ENCODE measurements at regions of chr5 and their contacts with region 1.

Region 1: GRCh38 chr5:76582230-76583162 is 40.7 kb downstream of the F2RL2 start:
- DNase-seq: no peak
- ATAC-seq: no peak
- H3K4me3 ChIP-seq: no peak overlapping the region
- H3K27ac ChIP-seq: no peak overlapping the region
- H3K4me1 ChIP-seq: no peaks in the 10 kb centered on the region
- H3K27me3 ChIP-seq: peaks cover 16% of the 10 kb centered on the region; the same call in 1 of the 2 replicates
- CTCF ChIP-seq: no peak

Region 2: DNA sequence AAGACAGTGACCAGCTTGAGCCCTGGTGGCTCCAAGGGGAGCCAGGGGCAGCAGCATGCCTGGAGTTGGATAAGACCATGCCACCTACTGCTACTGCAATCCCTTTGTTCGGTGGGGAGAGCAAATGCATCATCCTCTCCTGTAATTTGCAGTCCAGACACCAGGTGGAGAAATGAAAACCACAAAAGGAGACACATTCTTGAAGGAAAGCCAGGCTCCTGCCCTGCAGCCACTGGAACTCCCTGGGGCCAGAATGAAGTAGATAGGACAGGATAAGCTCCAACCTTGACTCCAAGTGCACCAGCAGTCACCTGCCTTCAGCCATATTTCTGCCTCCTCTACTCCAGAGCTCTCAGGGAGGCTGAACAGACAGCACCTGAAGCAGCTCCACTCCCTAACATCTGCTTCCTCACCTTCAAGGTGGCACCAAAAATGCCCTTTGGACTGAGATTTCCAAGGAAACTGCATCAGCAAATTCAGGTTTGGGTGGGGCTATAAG is 244.5 kb before region 1 on chr5:
- CTCF ChIA-PET with region 1: no interaction called
- POLR2A ChIA-PET with region 1: no interaction called
- in situ Hi-C with region 1: no loop called
- intact Hi-C with region 1: loop called (anchors 5 kb)
- DNase-seq: peak; percentile 36
- ATAC-seq: peak; percentile 89
- H3K4me3 ChIP-seq: no peak overlapping the region
- H3K27ac ChIP-seq: no peak overlapping the region
- H3K4me1 ChIP-seq: peaks cover 7% of the 10 kb centered on the region
- H3K27me3 ChIP-seq: peaks cover 2% of the 10 kb centered on the region
- CTCF ChIP-seq: peak; percentile 64

Region 3: GRCh38 chr5:76402886-76403765 is 179.4 kb before region 1 on chr5 and contains the start of gene IQGAP2:
- CTCF ChIA-PET with region 1: interaction called, 3 read pairs
- POLR2A ChIA-PET with region 1: no interaction called
- in situ Hi-C with region 1: no loop called
- intact Hi-C with region 1: loop called (anchors 10 kb)
- DNase-seq: no peak
- ATAC-seq: peak; percentile 88
- H3K4me3 ChIP-seq: peak within 1 kb of the TSS; percentile 50 to 59
- H3K27ac ChIP-seq: no peak within 1 kb of the TSS
- H3K4me1 ChIP-seq: no peaks in the 10 kb centered on the region
- H3K27me3 ChIP-seq: peaks cover 57% of the 10 kb centered on the region
- CTCF ChIP-seq: peak; percentile 84
- total RNA-seq, gene IQGAP2: 0.59 TPM

Region 4: DNA sequence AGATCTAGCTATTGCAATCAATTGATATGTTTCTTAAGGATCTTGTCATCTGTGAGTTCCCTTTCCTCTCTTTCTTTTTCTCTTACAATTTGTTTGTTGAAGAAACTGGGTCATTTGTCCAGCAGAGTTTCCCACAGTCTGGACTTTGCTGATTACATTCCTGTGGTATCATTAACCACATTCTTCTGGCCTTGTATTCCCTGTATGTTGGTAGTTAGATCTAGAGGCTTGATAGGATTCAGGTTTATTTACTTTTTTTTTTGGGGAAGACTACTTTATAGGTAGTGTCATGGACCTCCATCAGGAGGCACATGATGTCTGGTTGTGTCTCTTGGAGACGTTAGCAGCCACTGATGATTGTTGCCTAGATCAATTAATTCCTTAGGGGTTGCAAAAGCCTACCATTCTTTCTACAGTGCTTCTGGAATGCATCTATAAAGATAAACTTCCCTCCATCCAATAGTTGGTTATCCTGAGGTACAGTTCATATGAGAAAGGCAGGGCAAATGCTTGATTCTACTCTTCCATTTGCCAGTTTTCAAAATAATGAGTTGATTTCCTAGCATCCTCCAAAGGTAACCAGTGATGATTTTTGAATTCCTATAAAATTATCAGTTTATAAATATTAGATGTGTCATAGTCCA is 642.3 kb after region 1 on chr5:
- CTCF ChIA-PET with region 1: no interaction called
- POLR2A ChIA-PET with region 1: no interaction called
- in situ Hi-C with region 1: no loop called
- intact Hi-C with region 1: no loop called
- DNase-seq: no peak
- ATAC-seq: peak; percentile 83; the same call in 1 of the 2 replicates
- H3K4me3 ChIP-seq: no peak overlapping the region
- H3K27ac ChIP-seq: no peak overlapping the region
- H3K4me1 ChIP-seq: peaks cover 7% of the 10 kb centered on the region; the same call in 1 of the 2 replicates
- H3K27me3 ChIP-seq: peaks cover 20% of the 10 kb centered on the region
- CTCF ChIP-seq: no peak